ENCODE measurements at regions of chr3 and their contacts with region 1.

Region 1: DNA sequence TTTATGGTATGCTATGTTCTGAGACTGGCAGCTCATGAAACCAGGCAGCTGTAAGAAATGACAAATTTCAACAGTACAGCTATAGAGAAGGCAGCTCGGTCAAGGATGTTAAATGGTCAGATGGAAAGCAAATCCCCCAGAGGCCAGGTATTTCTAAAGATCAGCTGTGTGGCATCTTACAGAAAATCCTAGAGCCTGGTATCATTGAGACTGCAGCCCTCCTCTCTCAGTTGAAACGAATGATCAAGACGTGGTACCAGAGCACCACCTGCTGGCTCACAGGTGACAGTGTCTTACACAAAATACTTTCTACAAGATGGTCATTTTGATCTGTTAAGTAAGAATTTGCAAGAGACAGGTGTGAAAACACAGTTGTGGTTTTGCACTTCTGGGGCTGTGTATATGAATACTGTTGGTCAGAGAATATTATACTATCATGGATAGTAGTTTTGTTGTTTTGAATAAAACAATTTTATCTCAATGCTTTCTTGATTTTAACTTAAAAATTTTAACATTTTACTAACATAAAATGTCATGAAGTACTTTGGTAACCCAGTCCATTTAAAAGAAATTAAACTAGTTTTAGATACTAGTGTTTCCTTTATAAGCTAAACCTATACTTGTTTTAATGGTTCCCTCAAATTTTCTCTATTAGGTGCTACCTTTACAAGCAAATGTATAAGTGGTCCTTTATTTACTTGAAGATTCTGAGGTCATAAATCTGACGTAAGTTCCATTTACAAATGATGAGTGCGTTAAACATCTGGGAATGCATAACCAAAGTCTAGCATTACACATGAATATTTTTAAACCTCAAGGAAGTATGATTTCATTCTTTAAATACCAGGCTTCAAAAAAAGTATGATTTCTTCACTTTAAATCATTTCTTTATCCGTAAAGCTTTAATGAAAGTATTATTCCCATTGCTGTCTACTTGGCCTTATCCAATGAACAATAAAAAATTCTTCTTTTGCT is 121.8 kb downstream of the PDZRN3 start:
- DNase-seq: peak; percentile 81
- H3K4me3 ChIP-seq: no peak overlapping the region
- H3K27ac ChIP-seq: no peak overlapping the region
- H3K4me1 ChIP-seq: no peaks in the 10 kb centered on the region
- H3K27me3 ChIP-seq: no peaks in the 10 kb centered on the region
- CTCF ChIP-seq: peak; percentile 40 to 83 (median 68)
- POLR2A ChIP-seq: no peak

Region 2: GRCh38 chr3:73107676-73108187 is 395.2 kb before region 1 on chr3:
- intact Hi-C with region 1: loop called (anchors 5 kb)
- DNase-seq: no peak
- H3K4me3 ChIP-seq: no peak overlapping the region
- H3K27ac ChIP-seq: no peak overlapping the region
- H3K4me1 ChIP-seq: no peaks in the 10 kb centered on the region
- H3K27me3 ChIP-seq: peaks cover 0 to 9% (median 0%) of the 10 kb centered on the region in 7 donors
- CTCF ChIP-seq: no peak
- POLR2A ChIP-seq: no peak

Region 3: DNA sequence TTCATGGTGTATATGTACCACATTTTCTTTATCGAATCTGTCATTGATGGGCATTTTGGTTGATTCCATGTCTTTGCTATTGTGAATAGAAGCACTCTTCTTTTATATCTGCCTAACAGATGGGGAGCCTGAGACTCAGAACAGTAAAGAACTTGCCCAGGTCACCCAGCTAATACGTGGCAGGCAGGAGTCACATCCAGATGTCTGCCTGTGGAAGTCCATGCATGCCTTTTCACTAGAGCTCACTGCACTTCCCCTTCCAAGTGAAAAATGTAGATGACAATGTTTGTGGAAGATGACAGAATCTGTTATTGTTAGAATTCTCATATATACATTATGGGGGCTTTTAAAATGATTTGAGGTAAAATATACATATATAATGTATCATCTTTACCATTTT is 43.2 kb before region 1 on chr3:
- intact Hi-C with region 1: loop called (anchors 5 kb)
- DNase-seq: no peak
- H3K4me3 ChIP-seq: no peak overlapping the region
- H3K27ac ChIP-seq: no peak overlapping the region
- H3K4me1 ChIP-seq: no peaks in the 10 kb centered on the region
- H3K27me3 ChIP-seq: no peaks in the 10 kb centered on the region
- CTCF ChIP-seq: no peak
- POLR2A ChIP-seq: no peak

Region 4: DNA sequence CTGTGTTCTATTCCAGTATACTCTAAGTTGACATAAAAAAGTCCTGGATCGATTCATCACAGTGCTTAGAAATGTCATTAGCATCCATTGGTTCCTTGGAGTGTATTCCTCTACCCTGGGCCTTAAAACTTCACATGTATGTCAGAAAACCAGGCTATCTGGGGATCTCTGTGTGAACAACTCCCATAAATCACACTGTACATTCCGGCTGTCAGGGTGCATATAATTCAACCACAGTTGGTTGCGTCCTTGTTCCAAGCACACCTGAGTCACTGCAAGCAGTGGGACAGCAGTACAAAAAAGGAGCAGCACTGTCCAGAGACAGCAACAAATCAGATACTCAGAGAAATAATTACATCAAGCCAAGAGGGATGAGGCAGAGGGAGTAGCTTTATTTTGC is 69.5 kb after region 1 on chr3:
- intact Hi-C with region 1: no loop called
- DNase-seq: no peak
- H3K4me3 ChIP-seq: no peak overlapping the region
- H3K27ac ChIP-seq: no peak overlapping the region
- H3K4me1 ChIP-seq: no peaks in the 10 kb centered on the region
- H3K27me3 ChIP-seq: peaks cover 0 to 39% (median 0%) of the 10 kb centered on the region in 7 donors
- CTCF ChIP-seq: no peak
- POLR2A ChIP-seq: no peak

Region 5: DNA sequence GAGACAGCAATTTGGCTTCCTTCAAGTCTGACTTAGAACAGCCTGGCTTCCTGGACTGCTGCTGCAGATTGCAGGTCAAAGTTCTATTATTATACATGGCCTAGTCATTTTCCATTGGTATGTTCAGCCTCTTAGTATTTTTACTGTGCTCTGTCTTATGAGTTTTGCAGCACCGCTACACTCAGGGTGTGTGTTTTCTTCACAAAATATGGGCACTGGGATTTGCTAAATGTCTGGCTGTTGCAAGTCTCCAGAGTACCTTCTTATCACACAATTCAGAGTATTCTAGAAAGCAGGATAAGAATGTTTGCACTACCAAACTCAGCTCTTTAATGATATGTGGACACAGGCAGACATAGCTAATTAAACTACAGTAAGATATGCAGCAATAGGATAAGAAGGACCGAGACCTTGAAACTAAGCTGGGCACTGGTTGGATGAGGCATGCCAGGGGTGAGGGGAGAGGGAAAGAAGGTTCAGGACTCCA is 324.9 kb after region 1 on chr3:
- intact Hi-C with region 1: no loop called
- DNase-seq: no peak
- H3K4me3 ChIP-seq: no peak overlapping the region
- H3K27ac ChIP-seq: no peak overlapping the region
- H3K4me1 ChIP-seq: no peaks in the 10 kb centered on the region
- H3K27me3 ChIP-seq: no peaks in the 10 kb centered on the region
- CTCF ChIP-seq: no peak
- POLR2A ChIP-seq: no peak

Measured in spleen (tissue), 13 donors.